Heart left ventricle (tissue), 16 donors: ENCODE measurements at regions of chr6 and their contacts with region 1.

Region 1: DNA sequence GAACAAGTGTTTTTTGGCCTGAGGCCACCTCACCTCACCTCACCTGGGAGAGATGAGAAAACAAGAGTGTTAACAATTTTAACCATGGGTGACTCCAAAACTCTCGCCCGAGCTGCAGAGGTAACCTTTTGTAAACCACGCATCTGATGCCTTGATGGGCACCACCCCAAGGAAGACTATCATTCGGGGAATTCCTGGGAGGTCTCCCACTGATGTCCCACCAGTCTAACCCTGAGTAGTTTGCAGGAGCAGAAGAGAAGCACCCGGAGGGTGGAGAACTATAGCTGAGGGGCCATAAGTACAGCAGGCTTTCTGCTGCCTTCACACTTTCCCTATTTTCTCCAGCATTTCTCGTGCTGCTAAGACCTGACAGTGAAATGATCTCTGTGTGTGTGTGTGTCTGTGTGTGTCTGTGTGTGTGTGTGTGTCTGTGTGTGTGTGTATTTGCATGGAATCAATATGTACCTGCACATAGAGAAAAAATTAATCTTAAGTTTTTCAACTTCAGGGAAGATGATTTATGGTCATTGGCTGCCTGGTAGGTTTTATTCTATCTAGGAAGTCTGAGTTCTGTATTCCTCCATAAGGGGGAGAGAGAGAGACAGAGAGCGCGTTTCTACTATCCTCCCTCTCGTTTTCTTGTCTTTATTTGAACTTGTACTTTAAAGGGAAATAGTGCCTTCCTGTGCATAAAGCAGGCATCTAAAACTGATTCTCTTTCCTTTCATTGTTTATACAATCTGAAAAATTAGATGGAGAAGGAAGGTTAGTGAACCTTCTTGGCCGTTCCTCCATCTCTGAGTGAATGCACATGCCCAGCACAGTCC is 75.8 kb downstream of the CAP2 start:
- DNase-seq: no peak
- ATAC-seq: no peak
- H3K4me3 ChIP-seq: no peak overlapping the region
- H3K27ac ChIP-seq: peak overlapping the region in 1 of 12 donors; percentile 81
- H3K4me1 ChIP-seq: peaks cover 0 to 27% (median 6%) of the 10 kb centered on the region in 12 donors
- H3K27me3 ChIP-seq: no peaks in the 10 kb centered on the region
- CTCF ChIP-seq: peak in 7 of 12 donors; percentile 27 to 45 (median 33)
- POLR2A ChIP-seq: no peak

Region 2: GRCh38 chr6:17297271-17298080 is 171.7 kb before region 1 on chr6:
- intact Hi-C with region 1: no loop called
- DNase-seq: no peak
- ATAC-seq: peak in 3 of 4 donors; percentile 24 to 56 (median 36)
- H3K4me3 ChIP-seq: no peak overlapping the region
- H3K27ac ChIP-seq: peak overlapping the region; percentile 4 to 69 (median 36)
- H3K4me1 ChIP-seq: peaks cover 0 to 32% (median 4%) of the 10 kb centered on the region in 12 donors
- H3K27me3 ChIP-seq: no peaks in the 10 kb centered on the region
- CTCF ChIP-seq: no peak
- POLR2A ChIP-seq: no peak

Region 3: DNA sequence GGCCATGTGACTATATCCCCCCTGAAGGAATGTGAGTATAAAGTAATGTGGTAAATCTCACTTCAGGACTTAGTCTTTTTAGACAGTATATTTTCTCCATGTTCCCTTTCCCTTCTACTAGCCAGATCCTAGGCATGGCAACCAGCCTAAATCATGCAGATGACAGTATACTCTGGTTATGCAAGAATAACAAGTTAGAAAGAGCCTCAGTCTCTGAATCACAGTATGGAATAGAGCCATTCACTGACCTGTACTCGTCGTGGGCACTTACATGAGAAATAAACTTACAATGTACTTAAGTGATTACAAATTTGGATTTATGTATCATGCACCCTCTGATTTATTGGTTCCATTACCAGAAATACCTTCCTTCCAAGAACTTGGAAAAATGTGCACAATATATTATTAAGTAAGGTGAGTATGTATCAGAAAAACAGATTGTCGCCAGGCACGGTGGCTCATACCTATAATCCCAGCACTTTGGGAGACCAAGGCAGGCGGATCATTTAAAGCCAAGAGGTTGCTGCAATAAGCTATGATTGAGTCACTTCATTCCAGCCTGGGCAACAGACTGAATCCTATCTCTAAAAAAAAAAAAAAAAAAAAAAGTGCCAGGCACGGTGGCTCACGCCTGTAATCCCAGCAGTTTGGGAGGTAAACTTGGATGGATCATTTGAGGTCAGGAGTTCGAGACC is 105.8 kb after region 1 on chr6:
- intact Hi-C with region 1: loop called in 2 of 10 experiments (anchors 10 kb)
- DNase-seq: no peak
- ATAC-seq: no peak
- H3K4me3 ChIP-seq: no peak overlapping the region
- H3K27ac ChIP-seq: no peak overlapping the region
- H3K4me1 ChIP-seq: peaks cover 0 to under 1% (median 0%) of the 10 kb centered on the region in 12 donors
- H3K27me3 ChIP-seq: peaks cover 0 to 4% (median 0%) of the 10 kb centered on the region in 9 donors
- CTCF ChIP-seq: no peak
- POLR2A ChIP-seq: no peak

Region 4: GRCh38 chr6:17628873-17629272 is 159.7 kb after region 1 on chr6:
- intact Hi-C with region 1: no loop called
- DNase-seq: no peak
- ATAC-seq: no peak
- H3K4me3 ChIP-seq: no peak overlapping the region
- H3K27ac ChIP-seq: no peak overlapping the region
- H3K4me1 ChIP-seq: peaks cover 0 to 57% (median 14%) of the 10 kb centered on the region in 12 donors
- H3K27me3 ChIP-seq: no peaks in the 10 kb centered on the region
- CTCF ChIP-seq: no peak
- POLR2A ChIP-seq: no peak